PC-3 (cell line): ENCODE measurements at regions of chr13 and their contacts with region 1.

Region 1: GRCh38 chr13:106121173-106121754 is 414.2 kb downstream of the EFNB2 start:
- DNase-seq: peak; percentile 70
- ATAC-seq: peak; percentile 81
- H3K4me3 ChIP-seq: no peak overlapping the region
- H3K27ac ChIP-seq: peak overlapping the region; percentile 92
- H3K4me1 ChIP-seq: peaks cover 50% of the 10 kb centered on the region
- H3K27me3 ChIP-seq: no peaks in the 10 kb centered on the region
- CTCF ChIP-seq: no peak

Region 2: DNA sequence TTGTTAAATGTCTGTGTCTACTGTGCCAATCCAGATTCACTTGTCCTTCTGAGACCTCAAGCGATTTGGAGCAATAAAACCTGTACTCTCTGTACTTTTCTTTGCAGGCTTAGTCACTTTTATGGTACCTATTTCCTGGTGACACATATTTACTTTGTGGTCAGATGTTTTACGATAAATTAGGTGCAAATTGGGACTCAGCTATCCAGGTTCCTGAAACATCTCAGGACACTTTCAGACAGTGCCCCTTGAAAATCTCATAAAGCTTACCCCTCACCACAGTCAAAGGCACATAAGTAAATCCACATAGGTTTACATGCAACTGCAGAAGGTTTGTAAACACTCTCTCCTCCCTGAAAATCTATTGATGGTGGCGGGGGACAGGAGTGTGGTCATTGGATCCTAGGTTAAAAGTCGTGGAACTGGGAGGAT is 24.6 kb before region 1 on chr13:
- CTCF ChIA-PET with region 1: no interaction called
- POLR2A ChIA-PET with region 1: no interaction called
- intact Hi-C with region 1: loop called (anchors 2 kb)
- DNase-seq: peak; percentile 90
- ATAC-seq: peak; percentile 72
- H3K4me3 ChIP-seq: peak overlapping the region; percentile 34; the same call in 1 of the 2 replicates
- H3K27ac ChIP-seq: peak overlapping the region; percentile 95
- H3K4me1 ChIP-seq: peaks cover 65% of the 10 kb centered on the region
- H3K27me3 ChIP-seq: no peaks in the 10 kb centered on the region
- CTCF ChIP-seq: no peak

Region 3: DNA sequence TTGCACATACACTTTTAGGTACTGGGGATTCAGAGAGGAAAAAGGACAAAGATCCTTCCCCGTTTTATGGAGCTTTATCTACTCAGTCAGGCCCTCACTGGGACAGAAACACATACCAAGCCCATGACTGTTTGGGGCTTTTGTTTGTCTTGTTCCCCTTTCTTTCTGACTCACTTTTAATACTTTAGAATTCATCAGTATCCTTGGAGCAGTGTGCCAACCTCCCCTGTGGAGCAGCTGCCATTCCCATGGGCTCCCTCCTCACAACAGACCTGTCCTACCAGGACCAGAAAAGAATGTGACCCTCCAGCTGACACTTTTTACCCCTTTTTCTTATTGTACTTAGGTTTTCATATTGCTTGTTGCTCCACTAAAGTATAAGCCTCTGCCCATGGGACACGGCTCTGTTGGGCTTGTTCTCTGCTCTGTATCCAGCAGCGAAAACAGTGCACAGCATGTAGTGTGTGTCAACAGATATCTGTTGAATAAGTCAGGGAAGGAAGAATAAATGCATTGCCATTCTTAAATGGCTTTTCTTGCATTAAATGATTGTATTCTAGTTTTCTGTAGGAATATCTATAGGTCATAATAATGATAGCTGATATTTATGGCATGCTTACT is 16.9 kb before region 1 on chr13:
- CTCF ChIA-PET with region 1: no interaction called
- POLR2A ChIA-PET with region 1: no interaction called
- intact Hi-C with region 1: loop called (anchors 1 kb)
- DNase-seq: peak; percentile 91
- ATAC-seq: peak; percentile 75
- H3K4me3 ChIP-seq: peak overlapping the region; percentile 46; the same call in 1 of the 2 replicates
- H3K27ac ChIP-seq: peak overlapping the region; percentile 100
- H3K4me1 ChIP-seq: peaks cover 71% of the 10 kb centered on the region
- H3K27me3 ChIP-seq: no peaks in the 10 kb centered on the region
- CTCF ChIP-seq: no peak

Region 4: GRCh38 chr13:106464076-106464475 is 342.8 kb after region 1 on chr13:
- CTCF ChIA-PET with region 1: no interaction called
- POLR2A ChIA-PET with region 1: no interaction called
- intact Hi-C with region 1: no loop called
- DNase-seq: no peak
- ATAC-seq: no peak
- H3K4me3 ChIP-seq: no peak overlapping the region
- H3K27ac ChIP-seq: no peak overlapping the region
- H3K4me1 ChIP-seq: no peaks in the 10 kb centered on the region
- H3K27me3 ChIP-seq: no peaks in the 10 kb centered on the region
- CTCF ChIP-seq: no peak